ENCODE measurements at regions of chr1 and their contacts with region 1.

Region 1: DNA sequence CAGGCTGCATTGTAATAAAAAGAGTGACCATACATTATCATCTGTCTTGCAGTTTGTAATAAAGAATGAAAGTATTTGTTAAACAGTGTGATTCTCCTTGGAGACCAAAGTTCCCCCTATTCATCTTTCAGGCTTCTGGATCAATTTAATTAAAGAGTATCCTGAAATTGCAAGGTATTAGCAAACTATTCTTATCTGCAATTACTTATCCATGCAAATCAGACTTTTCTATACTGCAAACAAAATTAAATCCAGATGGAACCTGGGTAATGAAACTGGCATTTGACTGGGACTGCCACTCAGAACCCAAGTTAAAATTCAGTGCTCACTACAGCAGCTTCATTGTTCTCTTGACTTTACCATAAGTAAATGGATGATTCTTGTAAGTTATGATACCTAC is 37.1 kb downstream of the JAK1 start:
- DNase-seq: no peak
- H3K4me3 ChIP-seq: no peak overlapping the region
- H3K27ac ChIP-seq: no peak overlapping the region
- H3K4me1 ChIP-seq: peaks cover 8% of the 10 kb centered on the region
- H3K27me3 ChIP-seq: no peaks in the 10 kb centered on the region
- CTCF ChIP-seq: no peak

Region 2: GRCh38 chr1:63984257-63984929 is 944.8 kb before region 1 on chr1:
- CTCF ChIA-PET with region 1: no interaction called
- POLR2A ChIA-PET with region 1: no interaction called
- intact Hi-C with region 1: no loop called
- DNase-seq: no peak
- H3K4me3 ChIP-seq: no peak overlapping the region
- H3K27ac ChIP-seq: no peak overlapping the region
- H3K4me1 ChIP-seq: peaks cover 38% of the 10 kb centered on the region
- H3K27me3 ChIP-seq: no peaks in the 10 kb centered on the region
- CTCF ChIP-seq: no peak

Region 3: GRCh38 chr1:64875101-64875500 is 54.1 kb before region 1 on chr1:
- CTCF ChIA-PET with region 1: no interaction called
- POLR2A ChIA-PET with region 1: no interaction called
- intact Hi-C with region 1: loop called (anchors 1 kb)
- DNase-seq: no peak
- H3K4me3 ChIP-seq: no peak overlapping the region
- H3K27ac ChIP-seq: no peak overlapping the region
- H3K4me1 ChIP-seq: no peaks in the 10 kb centered on the region
- H3K27me3 ChIP-seq: no peaks in the 10 kb centered on the region
- CTCF ChIP-seq: no peak